Right ventricle myocardium inferior (tissue), 1 donor: ENCODE measurements at regions of chr4 and their contacts with region 1.

Region 1: DNA sequence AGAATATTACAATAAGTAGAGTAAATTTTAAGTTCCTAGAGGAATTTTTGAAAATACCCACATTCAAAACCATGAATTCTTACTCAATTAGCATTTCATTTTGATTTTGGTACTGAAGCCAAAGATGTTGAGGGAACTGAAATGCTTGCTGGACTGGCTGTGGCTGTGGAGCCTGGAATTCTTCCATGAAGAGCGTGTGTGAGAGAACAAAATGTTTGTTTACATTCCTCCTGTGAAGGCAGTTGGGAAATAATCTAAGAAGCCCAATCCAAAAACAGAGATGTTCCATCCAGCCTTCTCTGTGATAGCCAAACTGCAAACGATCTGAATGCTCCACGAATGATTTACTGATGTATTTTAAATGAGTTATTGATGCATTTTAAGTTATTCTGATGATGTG is 3.8 kb upstream of the ADH1B start:
- DNase-seq: no peak
- ATAC-seq: peak; percentile 85

Region 2: DNA sequence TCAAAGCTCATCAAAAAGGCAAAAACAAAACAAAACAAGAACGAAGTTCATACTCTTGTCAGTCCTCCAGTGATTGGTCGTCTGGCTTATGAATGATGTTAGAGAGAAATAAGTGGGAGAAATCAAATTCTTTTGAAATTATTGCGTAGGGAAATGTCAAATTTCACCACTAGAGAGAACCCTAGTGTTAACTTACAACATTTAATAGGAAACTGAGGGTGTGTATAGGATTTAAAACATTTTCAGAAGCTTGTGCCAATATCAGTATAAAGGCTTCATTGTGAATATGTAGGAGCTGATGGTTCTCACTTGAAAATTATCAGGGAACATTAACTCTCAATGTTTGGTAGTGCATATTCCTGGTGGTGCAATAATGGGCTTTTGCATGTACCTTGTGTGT is 123.3 kb before region 1 on chr4:
- intact Hi-C with region 1: loop called (anchors 5 kb)
- DNase-seq: no peak
- ATAC-seq: peak; percentile 69

Region 3: DNA sequence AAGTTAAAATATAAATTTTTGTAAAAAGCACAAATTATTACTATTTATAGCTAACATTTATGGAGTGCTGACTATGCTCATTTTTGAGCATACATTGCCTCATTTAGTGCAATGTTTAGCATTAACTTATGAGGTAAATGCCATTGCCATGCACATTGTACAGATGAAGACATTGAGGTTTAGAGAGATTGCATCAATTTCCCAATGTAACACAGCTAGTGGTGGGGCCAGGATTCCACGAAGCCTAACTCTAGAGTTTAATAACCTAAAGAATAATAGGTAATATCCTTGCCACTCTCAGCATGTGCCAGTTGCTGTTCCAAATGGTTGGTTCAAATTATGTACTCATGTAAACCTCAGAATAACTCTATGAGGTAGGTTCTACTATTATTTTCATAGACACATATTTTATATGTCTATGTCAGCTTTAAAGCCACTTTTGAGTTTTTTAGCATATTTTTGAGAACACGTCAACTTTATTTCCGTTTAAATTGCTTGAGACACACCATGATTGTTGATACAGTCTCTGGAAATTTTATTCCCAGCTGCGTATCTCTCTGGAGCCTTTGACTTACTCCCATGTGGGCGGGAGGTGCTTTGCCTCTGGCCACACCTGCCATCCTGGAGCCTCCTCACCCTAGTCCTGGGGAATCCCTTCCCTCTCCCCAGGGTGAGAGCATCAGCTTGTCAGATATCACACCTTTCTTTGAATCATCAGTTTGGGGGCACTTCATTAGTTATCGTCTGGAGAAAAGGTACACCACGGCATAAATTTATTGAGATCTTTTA is 23.4 kb before region 1 on chr4:
- intact Hi-C with region 1: no loop called
- DNase-seq: no peak
- ATAC-seq: no peak

Region 4: GRCh38 chr4:99383833-99384392 is 58.9 kb after region 1 on chr4:
- intact Hi-C with region 1: loop called (anchors 5 kb)
- DNase-seq: no peak
- ATAC-seq: peak; percentile 95